ENCODE measurements at regions of chr15 and their contacts with region 1.

Region 1: GRCh38 chr15:85044251-85044853 is 62.7 kb downstream of the PDE8A start:
- DNase-seq: peak; percentile 60
- H3K4me3 ChIP-seq: no peak overlapping the region
- H3K27ac ChIP-seq: no peak overlapping the region
- H3K4me1 ChIP-seq: no peaks in the 10 kb centered on the region
- H3K27me3 ChIP-seq: no peaks in the 10 kb centered on the region
- CTCF ChIP-seq: peak in 3 of 4 experiments; percentile 64 to 71 (median 66)
- POLR2A ChIP-seq: no peak

Region 2: GRCh38 chr15:84949845-84950569 is 94.3 kb before region 1 on chr15:
- intact Hi-C with region 1: loop called (anchors 5 kb)
- DNase-seq: no peak
- H3K4me3 ChIP-seq: no peak overlapping the region
- H3K27ac ChIP-seq: no peak overlapping the region
- H3K4me1 ChIP-seq: no peaks in the 10 kb centered on the region
- H3K27me3 ChIP-seq: no peaks in the 10 kb centered on the region
- CTCF ChIP-seq: no peak
- POLR2A ChIP-seq: no peak

Measured in prostate gland (tissue), 2 donors.